ENCODE measurements at regions of chr4 and their contacts with region 1.

Region 1: GRCh38 chr4:110631584-110632505 is 9.0 kb upstream of the PITX2 start:
- DNase-seq: no peak
- ATAC-seq: peak; percentile 93

Region 2: DNA sequence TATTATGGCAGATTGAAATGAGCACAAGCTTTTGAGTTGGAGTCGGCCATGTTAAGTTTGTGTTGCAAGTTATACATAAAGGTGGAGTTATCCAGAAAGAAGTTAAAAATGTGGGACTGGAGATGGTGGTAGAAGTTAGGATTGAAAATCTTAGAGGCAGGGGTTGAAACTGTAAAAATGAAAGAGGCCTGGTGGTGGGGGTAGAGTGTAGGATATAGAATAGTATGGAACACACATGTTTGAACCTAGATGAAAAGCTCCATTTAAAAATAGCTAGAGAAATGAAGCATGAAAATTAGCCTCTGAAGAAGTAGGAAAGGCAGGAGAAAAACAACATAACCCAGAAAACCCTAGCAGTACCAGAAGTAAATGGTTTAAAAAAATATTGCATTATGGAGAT is 287.7 kb before region 1 on chr4:
- intact Hi-C with region 1: no loop called
- DNase-seq: no peak
- ATAC-seq: no peak

Region 3: GRCh38 chr4:110516106-110516922 is 115.5 kb before region 1 on chr4:
- intact Hi-C with region 1: no loop called
- DNase-seq: no peak
- ATAC-seq: peak; percentile 73

Region 4: GRCh38 chr4:110615353-110616237 is 16.2 kb before region 1 on chr4:
- intact Hi-C with region 1: loop called (anchors 1 kb)
- DNase-seq: no peak
- ATAC-seq: no peak

Region 5: GRCh38 chr4:111283061-111283677 is 651.3 kb after region 1 on chr4:
- intact Hi-C with region 1: loop called (anchors 5 kb)
- DNase-seq: no peak
- ATAC-seq: no peak

Region 6: GRCh38 chr4:111475001-111475400 is 843.2 kb after region 1 on chr4:
- intact Hi-C with region 1: loop called (anchors 5 kb)
- DNase-seq: no peak
- ATAC-seq: no peak

Measured in Right ventricle myocardium inferior (tissue), 1 donor.